H1 (cell line): ENCODE measurements at regions of chr2 and their contacts with region 1.

Region 1: GRCh38 chr2:219543601-219544358 is at the starts of genes CHPF and TMEM198:
- DNase-seq: peak; percentile 98
- H3K4me3 ChIP-seq: peak within 1 kb of the TSS; percentile 73 to 90 (median 80)
- H3K27ac ChIP-seq: peak within 1 kb of the TSS; percentile 19; the same call in 1 of the 2 replicates
- H3K4me1 ChIP-seq: peaks cover 2 to 13% (median 7%) of the 10 kb centered on the region in 4 experiments; a peak in 6 of 7 replicates
- H3K27me3 ChIP-seq: peaks cover 0 to 4% (median 0%) of the 10 kb centered on the region in 4 experiments; a peak in 2 of 7 replicates
- CTCF ChIP-seq: no peak
- EP300 ChIP-seq: peak in 1 of 2 experiments; percentile 88; a peak in 1 of 3 replicates
- POLR2A ChIP-seq: peak in 1 of 2 experiments; percentile 60; a peak in 2 of 3 replicates
- RAD21 ChIP-seq: no peak; a peak in 1 of 4 replicates
- total RNA-seq, gene CHPF: 62.9 and 68.1 TPM in 2 replicates
- total RNA-seq, gene TMEM198: 10.2 and 11.0 TPM in 2 replicates

Region 2: GRCh38 chr2:219530048-219530963 is 13.5 kb before region 1 on chr2:
- CTCF ChIA-PET with region 1: interaction called, 488 read pairs
- POLR2A ChIA-PET with region 1: interaction called, 9 read pairs
- DNase-seq: peak in 1 of 2 experiments; percentile 97
- H3K4me3 ChIP-seq: peak overlapping the region in 2 of 4 experiments; percentile 22 to 56; a peak in 4 of 8 replicates
- H3K27ac ChIP-seq: no peak overlapping the region
- H3K4me1 ChIP-seq: peaks cover 0 to 8% (median 3%) of the 10 kb centered on the region in 4 experiments; a peak in 4 of 7 replicates
- H3K27me3 ChIP-seq: peaks cover 0 to 24% (median 10%) of the 10 kb centered on the region in 4 experiments; a peak in 6 of 7 replicates
- CTCF ChIP-seq: peak in 2 of 3 experiments; percentile 96 to 99; a peak in 3 of 4 replicates
- EP300 ChIP-seq: no peak
- POLR2A ChIP-seq: no peak
- RAD21 ChIP-seq: peak; percentile 99 to 100

Region 3: GRCh38 chr2:219576493-219577388 is 33.0 kb after region 1 on chr2:
- CTCF ChIA-PET with region 1: interaction called, 12 read pairs
- POLR2A ChIA-PET with region 1: interaction called, 10 read pairs
- DNase-seq: peak in 1 of 2 experiments; percentile 78
- H3K4me3 ChIP-seq: peak overlapping the region in 1 of 4 experiments; percentile 40; a peak in 2 of 8 replicates
- H3K27ac ChIP-seq: no peak overlapping the region
- H3K4me1 ChIP-seq: peaks cover 7 to 26% (median 21%) of the 10 kb centered on the region in 4 experiments
- H3K27me3 ChIP-seq: no peaks in the 10 kb centered on the region; a peak in 1 of 7 replicates
- CTCF ChIP-seq: no peak
- EP300 ChIP-seq: no peak
- POLR2A ChIP-seq: peak in 1 of 2 experiments; percentile 38; a peak in 1 of 3 replicates
- RAD21 ChIP-seq: no peak

Region 4: GRCh38 chr2:219603771-219604170 is 60.0 kb after region 1 on chr2:
- CTCF ChIA-PET with region 1: interaction called, 54 read pairs
- POLR2A ChIA-PET with region 1: interaction called, 23 read pairs
- DNase-seq: no peak
- H3K4me3 ChIP-seq: no peak overlapping the region
- H3K27ac ChIP-seq: no peak overlapping the region
- H3K4me1 ChIP-seq: no peaks in the 10 kb centered on the region; a peak in 1 of 7 replicates
- H3K27me3 ChIP-seq: no peaks in the 10 kb centered on the region
- CTCF ChIP-seq: no peak
- EP300 ChIP-seq: no peak
- POLR2A ChIP-seq: no peak
- RAD21 ChIP-seq: no peak

Region 5: DNA sequence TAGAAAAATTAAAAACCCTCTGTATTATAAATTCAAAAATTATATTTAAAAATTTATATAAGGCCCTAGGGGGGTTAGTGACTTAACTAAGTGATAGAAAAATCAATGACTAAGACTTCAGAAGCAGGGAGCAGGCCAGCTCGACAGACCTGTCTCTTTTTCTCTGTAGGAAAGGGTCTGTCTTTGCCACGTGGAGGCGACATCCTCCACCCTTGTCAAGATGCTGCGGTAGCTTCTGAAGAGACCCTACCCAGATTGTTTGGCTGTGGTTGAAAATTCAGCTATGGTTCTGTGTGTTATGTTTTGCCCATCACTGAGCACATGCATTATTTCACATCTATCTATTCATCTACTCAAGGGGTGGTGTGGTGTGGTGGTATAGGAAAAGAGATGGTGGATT is 75.5 kb after region 1 on chr2:
- CTCF ChIA-PET with region 1: interaction called, 19 read pairs
- POLR2A ChIA-PET with region 1: interaction called, 5 read pairs
- DNase-seq: no peak
- H3K4me3 ChIP-seq: no peak overlapping the region
- H3K27ac ChIP-seq: no peak overlapping the region
- H3K4me1 ChIP-seq: no peaks in the 10 kb centered on the region
- H3K27me3 ChIP-seq: no peaks in the 10 kb centered on the region
- CTCF ChIP-seq: peak; percentile 58 to 80 (median 63)
- EP300 ChIP-seq: no peak
- POLR2A ChIP-seq: no peak
- RAD21 ChIP-seq: peak; percentile 75 to 84